ENCODE measurements at regions of chr3 and their contacts with region 1.

Region 1: GRCh38 chr3:153595186-153595815 is 433.3 kb downstream of the RAP2B start:
- DNase-seq: peak; percentile 50
- ATAC-seq: peak; percentile 52; the same call in 1 of the 2 replicates
- H3K4me3 ChIP-seq: no peak overlapping the region
- H3K27ac ChIP-seq: no peak overlapping the region
- H3K4me1 ChIP-seq: 0 out of 2 replicates have a peak, but pooled peaks cover 2% of the 10 kb centered on the region
- H3K27me3 ChIP-seq: peaks cover 16% of the 10 kb centered on the region
- CTCF ChIP-seq: peak; percentile 75
- POLR2A ChIP-seq: no peak
- RAD21 ChIP-seq: peak; percentile 82

Region 2: DNA sequence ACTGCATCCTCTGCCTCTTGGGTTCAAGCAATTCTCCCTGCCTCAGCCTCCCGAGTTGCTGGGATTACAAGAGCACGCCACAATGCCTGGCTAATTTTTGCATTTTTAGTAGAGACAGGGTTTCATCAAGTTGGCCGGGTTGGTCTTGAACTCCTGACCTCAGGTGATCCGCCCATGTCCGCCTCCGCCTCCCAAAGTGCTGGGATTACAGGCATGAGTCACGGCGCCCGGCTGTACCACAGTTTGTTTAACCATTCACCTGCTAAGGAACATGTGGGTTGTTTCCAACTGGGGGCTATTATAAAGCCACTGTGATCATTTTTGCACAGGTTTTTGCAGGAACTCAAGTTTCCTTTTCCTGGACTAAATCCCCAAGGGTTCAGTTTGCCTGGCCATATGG is 556.5 kb before region 1 on chr3:
- CTCF ChIA-PET with region 1: interaction called, 5 read pairs
- POLR2A ChIA-PET with region 1: no interaction called
- dilution Hi-C with region 1: no loop called
- in situ Hi-C with region 1: loop called (anchors 5 kb)
- intact Hi-C with region 1: loop called (anchors 1 kb)
- DNase-seq: no peak
- ATAC-seq: no peak
- H3K4me3 ChIP-seq: no peak overlapping the region
- H3K27ac ChIP-seq: no peak overlapping the region
- H3K4me1 ChIP-seq: peaks cover 1% of the 10 kb centered on the region
- H3K27me3 ChIP-seq: no peaks in the 10 kb centered on the region
- CTCF ChIP-seq: no peak
- POLR2A ChIP-seq: no peak
- RAD21 ChIP-seq: no peak

Region 3: GRCh38 chr3:153443961-153444360 is 151.3 kb before region 1 on chr3:
- CTCF ChIA-PET with region 1: no interaction called
- POLR2A ChIA-PET with region 1: no interaction called
- dilution Hi-C with region 1: no loop called
- in situ Hi-C with region 1: no loop called
- intact Hi-C with region 1: no loop called
- DNase-seq: peak; percentile 1
- ATAC-seq: no peak
- H3K4me3 ChIP-seq: no peak overlapping the region
- H3K27ac ChIP-seq: no peak overlapping the region
- H3K4me1 ChIP-seq: no peaks in the 10 kb centered on the region
- H3K27me3 ChIP-seq: no peaks in the 10 kb centered on the region
- CTCF ChIP-seq: peak; percentile 19; the same call in 1 of the 2 replicates
- POLR2A ChIP-seq: no peak
- RAD21 ChIP-seq: no peak

Region 4: DNA sequence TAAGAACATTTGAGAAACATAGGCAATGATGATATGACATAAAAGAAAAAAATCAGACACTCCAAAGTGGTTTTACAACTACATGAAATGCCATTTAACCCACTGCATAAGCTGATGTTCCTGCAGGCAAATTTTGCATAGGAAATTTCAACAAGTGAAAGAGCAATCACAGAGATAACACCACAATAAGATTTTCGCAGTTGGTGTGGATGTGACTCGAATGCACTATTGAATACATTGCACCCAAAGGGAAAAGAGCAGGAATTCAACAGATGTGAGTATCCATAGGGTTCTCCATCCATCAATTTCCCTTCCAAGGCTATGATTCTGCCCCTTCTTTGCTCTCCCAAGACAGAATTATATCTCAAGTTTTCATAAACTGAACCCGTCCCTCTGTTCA is 22.9 kb after region 1 on chr3:
- CTCF ChIA-PET with region 1: no interaction called
- POLR2A ChIA-PET with region 1: no interaction called
- dilution Hi-C with region 1: no loop called
- in situ Hi-C with region 1: no loop called
- intact Hi-C with region 1: loop called (anchors 1 kb)
- DNase-seq: no peak
- ATAC-seq: no peak
- H3K4me3 ChIP-seq: no peak overlapping the region
- H3K27ac ChIP-seq: no peak overlapping the region
- H3K4me1 ChIP-seq: no peaks in the 10 kb centered on the region; the same call in 1 of the 2 replicates
- H3K27me3 ChIP-seq: no peaks in the 10 kb centered on the region; the same call in 1 of the 2 replicates
- CTCF ChIP-seq: no peak
- POLR2A ChIP-seq: no peak
- RAD21 ChIP-seq: no peak

Region 5: GRCh38 chr3:154522036-154522602 is 926.8 kb after region 1 on chr3:
- CTCF ChIA-PET with region 1: no interaction called
- POLR2A ChIA-PET with region 1: no interaction called
- dilution Hi-C with region 1: no loop called
- in situ Hi-C with region 1: no loop called
- intact Hi-C with region 1: no loop called
- DNase-seq: no peak
- ATAC-seq: no peak
- H3K4me3 ChIP-seq: no peak overlapping the region
- H3K27ac ChIP-seq: no peak overlapping the region
- H3K4me1 ChIP-seq: no peaks in the 10 kb centered on the region
- H3K27me3 ChIP-seq: no peaks in the 10 kb centered on the region
- CTCF ChIP-seq: no peak
- POLR2A ChIP-seq: no peak
- RAD21 ChIP-seq: no peak